Naive thymus-derived CD4-positive, alpha-beta T cell (primary cell): ENCODE measurements at regions of chr1 and their contacts with region 1.

Region 1: DNA sequence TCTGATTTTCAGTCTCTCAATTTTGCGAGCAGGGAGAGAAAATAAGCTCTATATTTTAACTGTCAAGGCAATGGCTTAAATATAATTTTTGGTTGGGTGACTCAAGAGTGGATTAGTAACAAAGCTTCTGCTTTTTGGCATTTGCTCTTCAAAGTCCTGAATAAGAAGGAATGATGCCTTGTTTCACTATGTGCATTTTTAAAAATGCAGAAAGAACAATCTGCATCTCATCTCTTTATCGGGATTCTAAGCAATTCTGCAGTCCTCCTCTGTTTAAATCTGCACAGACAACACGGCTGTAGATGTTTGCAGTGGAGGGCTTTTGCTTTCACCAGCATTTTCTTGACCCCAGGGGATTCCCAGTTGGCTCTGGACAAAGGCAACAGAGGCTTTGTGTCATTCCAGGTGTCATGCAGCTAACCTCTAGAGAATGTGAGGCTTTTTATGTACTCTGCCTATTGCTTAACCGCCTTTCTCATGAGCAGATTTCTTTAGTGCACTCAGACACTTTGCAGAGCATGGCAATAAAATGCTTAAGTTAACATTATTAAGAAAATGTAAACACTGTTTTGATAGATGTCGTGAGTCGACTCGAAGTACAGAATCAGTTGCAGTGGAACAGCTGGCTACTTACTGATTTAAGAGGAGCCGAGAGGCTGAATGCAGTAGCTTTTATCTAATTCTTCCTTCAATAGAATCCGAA is 783.2 kb upstream of the NEGR1 start:
- DNase-seq: no peak
- ATAC-seq: no peak
- H3K4me3 ChIP-seq: no peak overlapping the region
- H3K4me3 Mint-ChIP-seq: no peak overlapping the region
- H3K27ac ChIP-seq: no peak overlapping the region
- H3K27ac Mint-ChIP-seq: no peak overlapping the region
- H3K4me1 ChIP-seq: no peaks in the 10 kb centered on the region
- H3K4me1 Mint-ChIP-seq: no peaks in the 10 kb centered on the region
- H3K27me3 ChIP-seq: no peaks in the 10 kb centered on the region
- H3K27me3 Mint-ChIP-seq: no peaks in the 10 kb centered on the region

Region 2: GRCh38 chr1:73009938-73010337 is 55.6 kb before region 1 on chr1:
- CTCF ChIA-PET with region 1: no interaction called
- POLR2A ChIA-PET with region 1: no interaction called
- intact Hi-C with region 1: loop called in 1 of 2 experiments (anchors 10 kb)
- DNase-seq: no peak
- ATAC-seq: no peak
- H3K4me3 ChIP-seq: no peak overlapping the region
- H3K4me3 Mint-ChIP-seq: no peak overlapping the region
- H3K27ac ChIP-seq: no peak overlapping the region
- H3K27ac Mint-ChIP-seq: no peak overlapping the region
- H3K4me1 ChIP-seq: no peaks in the 10 kb centered on the region
- H3K4me1 Mint-ChIP-seq: peaks cover 0 to 1% (median 0%) of the 10 kb centered on the region in 7 donors
- H3K27me3 ChIP-seq: no peaks in the 10 kb centered on the region
- H3K27me3 Mint-ChIP-seq: no peaks in the 10 kb centered on the region